ENCODE measurements at regions of chr19 and their contacts with region 1.

Region 1: DNA sequence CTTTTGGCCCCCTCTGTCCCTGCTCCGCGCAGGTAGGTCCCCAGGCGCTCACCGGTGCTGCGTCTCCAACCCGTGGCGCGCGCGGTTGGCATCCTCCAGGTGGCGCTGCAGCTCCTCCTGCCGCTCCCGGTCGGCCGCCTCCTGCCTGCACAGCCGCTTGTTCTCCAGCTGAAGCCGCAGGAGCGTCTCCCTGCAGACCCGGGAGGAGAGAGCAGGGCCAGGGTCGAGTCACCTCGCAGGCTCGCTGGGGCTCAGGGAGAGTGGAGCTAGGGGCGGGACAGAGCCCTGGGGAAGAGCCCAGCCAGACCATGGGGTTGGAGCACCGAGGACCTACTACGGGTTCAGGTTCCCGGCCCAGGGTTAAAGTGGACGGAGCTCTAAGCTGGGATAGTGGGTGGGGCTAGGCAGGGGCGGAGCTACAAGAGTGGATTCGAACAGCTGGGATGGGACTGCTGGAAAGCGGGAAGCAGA is 9.3 kb downstream of the HOOK2 start:
- DNase-seq: peak; percentile 45
- H3K4me3 ChIP-seq: peak overlapping the region; percentile 68
- H3K27ac ChIP-seq: no peak overlapping the region
- H3K27me3 ChIP-seq: no peaks in the 10 kb centered on the region
- CTCF ChIP-seq: peak; percentile 77

Region 2: DNA sequence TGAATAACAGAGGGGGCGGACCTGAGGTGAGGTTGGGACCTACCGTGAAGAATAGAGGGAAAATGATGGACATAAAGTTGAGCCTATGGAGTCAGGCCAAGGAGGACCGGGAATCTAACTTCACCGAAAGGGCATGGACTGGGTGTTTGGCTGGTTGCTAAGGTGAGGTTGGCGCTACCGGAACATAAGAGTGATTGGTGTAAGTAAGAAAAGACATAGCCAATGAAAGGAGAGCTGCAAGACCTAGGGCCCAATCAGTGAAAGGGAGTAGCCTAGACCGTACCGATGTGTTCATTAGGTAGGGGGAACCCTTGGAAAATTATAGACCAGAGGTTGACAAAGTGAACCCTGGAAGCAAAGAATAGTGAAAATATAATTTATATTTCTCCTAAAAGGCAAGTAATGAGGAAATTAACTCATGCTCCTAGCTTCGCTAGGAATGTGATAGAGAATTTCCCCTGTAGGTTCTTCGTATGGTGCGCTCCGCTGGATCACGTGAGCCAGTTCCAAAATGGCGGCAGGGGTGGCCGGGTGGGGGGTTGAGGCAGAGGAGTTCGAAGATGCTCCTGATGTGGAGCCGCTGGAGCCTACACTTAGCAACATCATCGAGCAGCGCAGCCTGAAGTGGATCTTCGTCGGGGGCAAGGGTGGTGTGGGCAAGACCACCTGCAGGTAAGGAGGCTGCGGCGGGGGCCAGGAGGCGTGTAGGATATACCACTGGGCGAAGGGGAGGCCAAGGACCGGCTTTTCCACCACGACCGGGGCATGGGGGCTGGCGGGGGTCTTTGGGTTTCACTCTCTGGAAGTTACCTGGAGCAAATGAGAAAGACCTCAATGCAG is 28.9 kb before region 1 on chr19 and contains the start of gene GET3:
- CTCF ChIA-PET with region 1: interaction called, 27 read pairs
- POLR2A ChIA-PET with region 1: interaction called, 3 read pairs
- DNase-seq: peak; percentile 100
- H3K4me3 ChIP-seq: peak within 1 kb of the TSS; percentile 99
- H3K27ac ChIP-seq: peak within 1 kb of the TSS; percentile 77
- H3K27me3 ChIP-seq: no peaks in the 10 kb centered on the region
- CTCF ChIP-seq: no peak
- polyA plus RNA-seq, gene GET3: 114 and 129 TPM in 2 replicates

Region 3: GRCh38 chr19:12777217-12778016 is 11.3 kb after region 1 on chr19:
- CTCF ChIA-PET with region 1: interaction called, 56 read pairs
- POLR2A ChIA-PET with region 1: interaction called, 13 read pairs
- DNase-seq: no peak
- H3K4me3 ChIP-seq: peak overlapping the region; percentile 68
- H3K27ac ChIP-seq: peak overlapping the region; percentile 98
- H3K27me3 ChIP-seq: no peaks in the 10 kb centered on the region
- CTCF ChIP-seq: peak; percentile 88

Region 4: GRCh38 chr19:12789904-12790619 is 24.0 kb after region 1 on chr19:
- CTCF ChIA-PET with region 1: interaction called, 410 read pairs
- POLR2A ChIA-PET with region 1: interaction called, 58 read pairs
- DNase-seq: peak; percentile 92
- H3K4me3 ChIP-seq: peak overlapping the region; percentile 57
- H3K27ac ChIP-seq: peak overlapping the region; percentile 91
- H3K27me3 ChIP-seq: no peaks in the 10 kb centered on the region
- CTCF ChIP-seq: no peak

Region 5: GRCh38 chr19:12796146-12797071 is 30.3 kb after region 1 on chr19:
- CTCF ChIA-PET with region 1: interaction called, 410 read pairs
- POLR2A ChIA-PET with region 1: interaction called, 58 read pairs
- DNase-seq: no peak
- H3K4me3 ChIP-seq: no peak overlapping the region
- H3K27ac ChIP-seq: peak overlapping the region; percentile 39
- H3K27me3 ChIP-seq: no peaks in the 10 kb centered on the region
- CTCF ChIP-seq: peak; percentile 96

Region 6: GRCh38 chr19:12825254-12826131 is 59.4 kb after region 1 on chr19:
- CTCF ChIA-PET with region 1: interaction called, 11 read pairs
- POLR2A ChIA-PET with region 1: no interaction called
- DNase-seq: no peak
- H3K4me3 ChIP-seq: no peak overlapping the region
- H3K27ac ChIP-seq: no peak overlapping the region
- H3K27me3 ChIP-seq: peaks cover 9% of the 10 kb centered on the region
- CTCF ChIP-seq: peak; percentile 33; the same call in 1 of the 2 replicates

Region 7: DNA sequence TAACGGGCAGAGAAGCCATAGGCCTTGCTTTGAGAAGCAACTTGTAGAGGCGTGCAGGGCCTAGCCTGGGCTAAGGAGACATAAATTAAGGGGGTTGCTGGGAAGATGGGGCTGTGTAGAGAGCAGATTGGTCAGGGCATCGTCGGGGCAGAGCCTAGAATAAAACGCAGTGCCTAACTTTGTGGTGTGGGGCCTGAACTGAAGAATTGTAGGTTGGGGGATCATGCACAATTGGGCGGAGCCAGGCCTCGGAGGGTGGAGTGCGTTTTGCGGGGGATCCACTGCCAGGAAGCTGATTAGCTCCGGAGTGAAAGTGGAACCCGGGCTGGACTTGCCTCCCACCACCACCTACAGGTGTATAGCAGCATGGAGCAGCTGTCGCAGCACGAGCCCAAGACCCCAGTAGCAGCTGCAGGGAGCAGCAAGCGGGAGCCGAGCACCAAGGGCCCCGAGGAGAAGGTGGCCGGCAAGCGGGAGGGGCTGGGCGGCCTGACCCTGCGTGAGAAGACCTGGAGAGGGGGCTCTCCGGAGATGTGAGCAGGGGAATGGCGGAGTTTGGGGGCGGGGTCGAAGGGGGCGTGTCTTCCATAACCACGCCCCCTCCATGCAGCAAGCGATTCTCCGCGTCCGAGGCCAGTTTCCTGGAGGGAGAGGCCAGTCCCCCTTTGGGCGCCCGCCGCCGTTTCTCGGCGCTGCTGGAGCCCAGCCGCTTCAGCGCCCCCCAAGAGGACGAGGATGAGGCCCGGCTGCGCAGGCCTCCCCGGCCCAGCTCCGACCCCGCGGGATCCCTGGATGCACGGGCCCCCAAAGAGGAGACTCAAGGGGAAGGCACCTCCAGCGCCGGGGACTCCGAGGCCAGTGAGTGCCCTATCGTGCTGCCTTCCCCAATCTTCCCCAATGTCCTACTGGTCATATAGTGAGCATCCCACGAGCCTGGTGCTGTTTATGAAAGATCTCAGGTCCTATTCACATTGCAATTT is 101.3 kb after region 1 on chr19:
- CTCF ChIA-PET with region 1: interaction called, 15 read pairs
- POLR2A ChIA-PET with region 1: no interaction called
- DNase-seq: no peak
- H3K4me3 ChIP-seq: peak overlapping the region; percentile 53
- H3K27ac ChIP-seq: no peak overlapping the region
- H3K27me3 ChIP-seq: peaks cover 4% of the 10 kb centered on the region
- CTCF ChIP-seq: 0 out of 2 replicates have a peak, but pooled peaks have one; percentile 1

Region 8: GRCh38 chr19:12956446-12957388 is 190.6 kb after region 1 on chr19 and contains the start of gene GADD45GIP1:
- CTCF ChIA-PET with region 1: no interaction called
- POLR2A ChIA-PET with region 1: no interaction called
- DNase-seq: no peak
- H3K4me3 ChIP-seq: peak within 1 kb of the TSS; percentile 99
- H3K27ac ChIP-seq: peak within 1 kb of the TSS; percentile 57
- H3K27me3 ChIP-seq: no peaks in the 10 kb centered on the region
- CTCF ChIP-seq: no peak
- polyA plus RNA-seq, gene GADD45GIP1: 31.6 and 35.1 TPM in 2 replicates

Measured in AG04450 (cell line).